ENCODE measurements at regions of chr6 and their contacts with region 1.

Region 1: DNA sequence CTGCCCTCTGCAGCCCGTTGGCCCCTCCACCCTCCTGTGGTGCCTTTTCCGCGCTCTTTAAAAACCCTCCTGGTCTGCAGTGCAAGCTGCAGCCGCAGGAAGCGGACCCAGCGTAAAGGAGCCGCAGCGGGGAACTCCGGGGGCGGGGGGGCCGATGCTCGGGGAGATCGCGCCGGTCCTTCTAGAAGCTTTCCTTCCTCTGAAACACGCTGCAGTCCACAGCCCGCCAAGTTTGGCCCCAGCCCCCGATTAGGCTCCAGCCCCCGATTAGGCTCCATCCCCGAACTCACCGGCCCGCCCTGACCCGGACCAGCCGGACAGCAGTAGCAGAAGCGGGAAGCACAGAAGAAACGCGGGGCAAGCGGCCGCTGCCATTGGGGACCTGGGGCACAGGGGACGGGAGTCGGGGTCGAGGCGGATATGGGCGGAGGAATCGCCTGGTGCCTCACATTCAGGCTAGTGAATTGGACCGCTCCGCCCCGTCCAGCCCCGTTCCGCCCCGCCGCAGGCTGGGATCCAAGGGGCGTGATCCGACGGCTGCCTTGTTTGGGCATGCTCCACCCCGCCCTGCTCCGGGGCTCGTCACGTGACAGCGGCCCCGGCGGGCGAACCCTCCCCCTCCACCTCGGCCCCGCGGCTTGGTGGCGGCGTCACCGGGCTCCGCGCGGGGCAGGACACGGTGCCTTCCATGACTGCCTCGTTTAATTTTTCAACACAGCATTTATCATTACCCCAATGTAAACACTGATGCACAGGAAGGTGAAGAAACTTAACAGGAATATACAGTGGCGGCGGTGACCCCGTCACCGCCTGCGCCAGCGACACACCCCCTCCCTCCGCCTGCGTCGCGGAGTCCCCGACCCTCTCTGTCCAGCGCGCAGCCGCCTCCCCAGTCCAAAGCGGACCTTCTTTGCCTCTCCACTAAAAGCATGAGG is 20.3 kb downstream of the RAET1L start:
- DNase-seq: peak; percentile 71 to 95 (median 88)
- ATAC-seq: peak; percentile 74
- H3K4me3 ChIP-seq: peak overlapping the region; percentile 81 to 82
- H3K4me3 Mint-ChIP-seq: peak overlapping the region; percentile 90
- H3K27ac ChIP-seq: peak overlapping the region; percentile 36 to 74
- H3K27ac Mint-ChIP-seq: peak overlapping the region; percentile 92
- H3K4me1 ChIP-seq: peaks cover 15% of the 10 kb centered on the region
- H3K4me1 Mint-ChIP-seq: peaks cover 28% of the 10 kb centered on the region
- H3K27me3 ChIP-seq: peaks cover 0 to 7% of the 10 kb centered on the region in 2 experiments
- H3K27me3 Mint-ChIP-seq: peaks cover 15% of the 10 kb centered on the region
- CTCF ChIP-seq: no peak

Region 2: DNA sequence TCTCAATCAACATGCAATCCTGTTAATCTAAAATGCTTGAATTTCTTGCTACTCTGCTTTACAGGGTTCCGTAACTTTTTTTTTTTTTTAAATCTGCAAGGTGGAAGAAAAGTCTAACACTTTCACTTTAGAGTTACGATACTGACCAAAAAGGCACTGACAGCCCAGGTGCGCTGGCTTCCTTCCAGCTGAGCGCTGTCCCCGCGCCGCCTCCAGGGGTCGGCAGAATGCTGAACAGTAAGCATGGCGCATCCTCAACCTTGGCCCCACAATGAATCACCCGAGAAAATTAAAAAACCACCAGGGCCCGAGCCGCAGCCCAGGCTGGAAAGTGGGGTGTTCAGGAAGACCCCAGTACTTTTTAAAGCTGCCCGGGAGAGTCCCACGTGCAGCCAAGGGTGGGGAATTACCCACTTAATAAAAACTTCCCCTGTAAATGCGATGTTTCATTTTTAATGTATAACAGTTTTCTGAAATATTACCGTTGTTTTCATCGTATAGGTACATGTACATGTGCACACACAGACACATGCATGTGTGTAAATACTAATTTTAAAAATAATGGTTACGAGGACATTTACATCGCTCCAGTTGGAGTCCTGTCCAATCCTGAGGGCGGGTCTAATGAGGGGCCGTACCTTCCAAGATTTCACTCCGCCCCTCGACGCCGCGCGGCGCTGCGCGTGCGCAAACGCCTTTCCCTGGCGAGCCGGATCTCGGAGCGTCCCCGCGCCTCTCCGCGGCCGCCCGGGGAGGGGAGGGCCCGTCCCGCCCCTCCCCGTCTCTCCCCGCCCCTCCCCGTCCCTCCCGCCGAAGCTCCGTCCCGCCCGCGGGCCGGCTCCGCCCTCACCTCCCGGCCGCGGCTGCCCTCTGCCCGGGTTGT is 439.3 kb before region 1 on chr6 and contains the start of gene GINM1:
- CTCF ChIA-PET with region 1: no interaction called
- POLR2A ChIA-PET with region 1: no interaction called
- intact Hi-C with region 1: loop called (anchors 10 kb)
- DNase-seq: peak; percentile 91 to 97 (median 94)
- ATAC-seq: peak; percentile 83
- H3K4me3 ChIP-seq: peak within 1 kb of the TSS; percentile 84 to 98
- H3K4me3 Mint-ChIP-seq: peak within 1 kb of the TSS; percentile 88
- H3K27ac ChIP-seq: peak within 1 kb of the TSS; percentile 75 to 88
- H3K27ac Mint-ChIP-seq: peak within 1 kb of the TSS; percentile 95
- H3K4me1 ChIP-seq: peaks cover 7% of the 10 kb centered on the region
- H3K4me1 Mint-ChIP-seq: peaks cover 18% of the 10 kb centered on the region
- H3K27me3 ChIP-seq: no peaks in the 10 kb centered on the region
- H3K27me3 Mint-ChIP-seq: no peaks in the 10 kb centered on the region
- CTCF ChIP-seq: peak; percentile 78
- total RNA-seq, gene GINM1: 32.7 to 35.2 TPM

Region 3: DNA sequence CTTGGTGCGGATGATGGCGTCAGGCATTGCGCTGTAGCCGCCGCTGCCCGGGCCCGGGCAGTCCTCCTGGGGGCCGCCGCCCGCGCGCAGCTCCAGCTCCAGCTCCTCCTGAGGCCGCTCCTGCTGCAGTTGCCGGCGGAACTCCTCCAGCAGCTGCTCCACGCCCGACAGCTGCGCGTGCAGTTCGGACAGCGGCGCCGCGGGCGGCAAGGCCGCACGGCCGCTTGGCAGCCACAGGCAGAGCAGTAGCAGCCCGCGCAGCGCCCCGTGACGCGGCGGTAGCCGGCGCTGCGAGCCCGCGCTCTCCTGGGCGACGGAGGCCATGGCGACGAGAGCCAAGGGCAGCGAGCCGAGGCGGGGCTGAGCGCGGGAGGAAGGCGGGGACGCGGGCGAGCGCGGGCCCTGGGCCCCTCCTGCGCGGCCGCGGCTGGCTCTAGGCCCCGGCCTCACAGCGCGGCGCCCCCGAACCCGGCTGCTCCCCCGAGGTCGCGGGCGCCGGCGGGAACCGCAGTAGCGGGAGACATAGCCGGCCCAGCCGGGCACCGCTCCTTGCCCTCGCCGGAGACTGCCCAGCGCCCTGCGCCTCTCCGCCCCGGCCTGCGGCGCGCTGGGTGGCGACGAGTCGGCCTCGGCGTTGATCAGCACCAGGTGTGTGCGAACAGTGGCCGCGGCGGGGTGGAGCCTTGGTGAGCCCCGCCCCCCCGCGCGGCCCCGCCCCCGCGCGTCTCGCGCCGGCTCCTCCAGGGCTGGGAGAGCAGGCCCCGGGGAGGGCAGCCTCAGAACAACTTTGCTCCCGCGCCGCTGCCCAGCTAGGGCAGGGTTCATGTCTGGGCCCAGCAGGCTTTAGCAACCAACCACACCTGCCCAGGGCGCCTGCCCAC is 141.1 kb before region 1 on chr6 and contains the start of gene LRP11:
- CTCF ChIA-PET with region 1: no interaction called
- POLR2A ChIA-PET with region 1: no interaction called
- intact Hi-C with region 1: loop called in 1 of 2 experiments (anchors 5 kb)
- DNase-seq: peak; percentile 65 to 87 (median 77)
- ATAC-seq: peak; percentile 90
- H3K4me3 ChIP-seq: peak within 1 kb of the TSS; percentile 38 to 60
- H3K4me3 Mint-ChIP-seq: peak within 1 kb of the TSS; percentile 85
- H3K27ac ChIP-seq: peak within 1 kb of the TSS in 1 of 2 experiments; percentile 18
- H3K27ac Mint-ChIP-seq: no peak within 1 kb of the TSS
- H3K4me1 ChIP-seq: peaks cover 7% of the 10 kb centered on the region
- H3K4me1 Mint-ChIP-seq: peaks cover 11% of the 10 kb centered on the region
- H3K27me3 ChIP-seq: peaks cover 3 to 4% of the 10 kb centered on the region in 2 experiments
- H3K27me3 Mint-ChIP-seq: peaks cover 34% of the 10 kb centered on the region
- CTCF ChIP-seq: no peak
- total RNA-seq, gene LRP11: 0.17 TPM in 1 of 2 experiments, not detected in the other

Region 4: GRCh38 chr6:149963462-149964307 is 41.4 kb before region 1 on chr6 and contains the start of gene ULBP1:
- CTCF ChIA-PET with region 1: interaction called, 15 read pairs
- POLR2A ChIA-PET with region 1: no interaction called
- intact Hi-C with region 1: loop called (anchors 1 to 2 kb)
- DNase-seq: peak; percentile 37 to 85 (median 72)
- ATAC-seq: peak; percentile 75
- H3K4me3 ChIP-seq: peak within 1 kb of the TSS; percentile 63 to 74
- H3K4me3 Mint-ChIP-seq: peak within 1 kb of the TSS; percentile 92
- H3K27ac ChIP-seq: no peak within 1 kb of the TSS
- H3K27ac Mint-ChIP-seq: peak within 1 kb of the TSS; percentile 46
- H3K4me1 ChIP-seq: peaks cover 25% of the 10 kb centered on the region
- H3K4me1 Mint-ChIP-seq: peaks cover 25% of the 10 kb centered on the region
- H3K27me3 ChIP-seq: peaks cover 31 to 44% of the 10 kb centered on the region in 2 experiments
- H3K27me3 Mint-ChIP-seq: peaks cover 84% of the 10 kb centered on the region
- CTCF ChIP-seq: no peak
- total RNA-seq, gene ULBP1: 0.28 to 0.41 TPM

Region 5: GRCh38 chr6:150057501-150057951 is 52.5 kb after region 1 on chr6:
- CTCF ChIA-PET with region 1: no interaction called
- POLR2A ChIA-PET with region 1: no interaction called
- intact Hi-C with region 1: no loop called
- DNase-seq: no peak
- ATAC-seq: no peak
- H3K4me3 ChIP-seq: no peak overlapping the region
- H3K4me3 Mint-ChIP-seq: no peak overlapping the region
- H3K27ac ChIP-seq: no peak overlapping the region
- H3K27ac Mint-ChIP-seq: no peak overlapping the region
- H3K4me1 ChIP-seq: peaks cover 5% of the 10 kb centered on the region
- H3K4me1 Mint-ChIP-seq: peaks cover 7% of the 10 kb centered on the region
- H3K27me3 ChIP-seq: peaks cover 5 to 6% of the 10 kb centered on the region in 2 experiments
- H3K27me3 Mint-ChIP-seq: peaks cover 43% of the 10 kb centered on the region
- CTCF ChIP-seq: no peak

Region 6: GRCh38 chr6:150068720-150069648 is 63.9 kb after region 1 on chr6 and contains the start of gene ULBP3:
- CTCF ChIA-PET with region 1: interaction called, 4 read pairs
- POLR2A ChIA-PET with region 1: no interaction called
- intact Hi-C with region 1: loop called in 1 of 2 experiments (anchors 2 kb)
- DNase-seq: peak; percentile 26 to 82 (median 62)
- ATAC-seq: peak; percentile 78
- H3K4me3 ChIP-seq: peak within 1 kb of the TSS; percentile 83 to 85
- H3K4me3 Mint-ChIP-seq: peak within 1 kb of the TSS; percentile 83
- H3K27ac ChIP-seq: no peak within 1 kb of the TSS
- H3K27ac Mint-ChIP-seq: no peak within 1 kb of the TSS
- H3K4me1 ChIP-seq: peaks cover 6% of the 10 kb centered on the region
- H3K4me1 Mint-ChIP-seq: peaks cover 14% of the 10 kb centered on the region
- H3K27me3 ChIP-seq: peaks cover 0 to 3% of the 10 kb centered on the region in 2 experiments
- H3K27me3 Mint-ChIP-seq: peaks cover 7% of the 10 kb centered on the region
- CTCF ChIP-seq: no peak
- total RNA-seq, gene ULBP3: 1.5 to 1.8 TPM

Region 7: GRCh38 chr6:150099546-150099945 is 94.5 kb after region 1 on chr6:
- CTCF ChIA-PET with region 1: no interaction called
- POLR2A ChIA-PET with region 1: no interaction called
- intact Hi-C with region 1: no loop called
- DNase-seq: no peak
- ATAC-seq: no peak
- H3K4me3 ChIP-seq: no peak overlapping the region
- H3K4me3 Mint-ChIP-seq: no peak overlapping the region
- H3K27ac ChIP-seq: no peak overlapping the region
- H3K27ac Mint-ChIP-seq: no peak overlapping the region
- H3K4me1 ChIP-seq: no peaks in the 10 kb centered on the region
- H3K4me1 Mint-ChIP-seq: peaks cover 3% of the 10 kb centered on the region
- H3K27me3 ChIP-seq: no peaks in the 10 kb centered on the region
- H3K27me3 Mint-ChIP-seq: peaks cover 9% of the 10 kb centered on the region
- CTCF ChIP-seq: no peak